A549 (cell line): ENCODE measurements at regions of chr17 and their contacts with region 1.

Region 1: DNA sequence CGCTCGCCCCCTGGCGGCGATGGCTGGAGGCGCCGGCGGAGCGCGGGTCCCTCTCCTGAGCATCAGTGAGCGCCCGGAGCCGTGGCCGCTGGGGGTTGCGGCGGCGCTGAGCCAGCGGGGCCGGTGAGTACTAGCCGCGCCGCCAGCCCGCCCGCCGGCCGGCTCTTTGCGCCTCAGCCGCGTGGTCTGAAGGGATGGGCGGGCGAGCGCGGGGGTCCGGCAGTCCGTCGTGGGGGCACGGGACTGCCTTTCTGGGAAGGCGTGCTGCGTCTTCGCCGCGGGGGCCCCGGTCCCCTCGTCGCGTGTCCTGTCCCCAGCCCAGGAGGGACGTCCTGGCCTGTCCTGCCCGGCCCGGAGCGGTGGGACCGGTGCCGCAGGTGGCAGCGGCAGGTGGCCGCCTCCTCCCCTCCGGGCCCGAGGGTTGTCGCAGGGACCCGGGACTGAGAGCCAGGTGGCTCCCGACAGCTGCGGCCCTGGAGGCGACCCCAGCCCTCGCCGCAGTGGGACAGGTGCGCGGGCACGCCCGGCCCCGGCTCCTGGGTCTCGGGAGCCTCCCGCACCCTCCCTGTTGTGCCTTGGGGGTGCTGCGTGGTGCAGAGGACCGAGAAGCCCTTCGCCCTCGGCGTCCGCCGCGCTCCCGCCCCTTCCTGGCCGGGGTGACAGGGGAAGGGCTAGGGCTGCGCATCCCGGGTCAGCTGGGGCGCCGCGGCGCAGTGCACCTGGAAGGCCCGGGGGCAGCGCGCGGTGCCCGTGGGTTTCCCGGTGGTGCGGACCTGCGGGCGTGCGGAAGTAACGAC is at the start of gene SPECC1:
- DNase-seq: peak; percentile 48 to 87
- ATAC-seq: peak; percentile 85 to 94
- H3K4me3 ChIP-seq: peak within 1 kb of the TSS; percentile 63
- H3K27ac ChIP-seq: peak within 1 kb of the TSS; percentile 88 to 93
- H3K4me1 ChIP-seq: peaks cover 25% of the 10 kb centered on the region
- CTCF ChIP-seq: peak; percentile 16; the same call in 2 of the 3 replicates
- EP300 ChIP-seq: no peak
- POLR2A ChIP-seq: peak; percentile 41; the same call in 1 of the 2 replicates
- RAD21 ChIP-seq: peak; percentile 37 to 64; a peak in 3 of 5 replicates
- polyA plus RNA-seq, gene SPECC1: 40.1 and 45.1 TPM in 2 replicates

Region 2: DNA sequence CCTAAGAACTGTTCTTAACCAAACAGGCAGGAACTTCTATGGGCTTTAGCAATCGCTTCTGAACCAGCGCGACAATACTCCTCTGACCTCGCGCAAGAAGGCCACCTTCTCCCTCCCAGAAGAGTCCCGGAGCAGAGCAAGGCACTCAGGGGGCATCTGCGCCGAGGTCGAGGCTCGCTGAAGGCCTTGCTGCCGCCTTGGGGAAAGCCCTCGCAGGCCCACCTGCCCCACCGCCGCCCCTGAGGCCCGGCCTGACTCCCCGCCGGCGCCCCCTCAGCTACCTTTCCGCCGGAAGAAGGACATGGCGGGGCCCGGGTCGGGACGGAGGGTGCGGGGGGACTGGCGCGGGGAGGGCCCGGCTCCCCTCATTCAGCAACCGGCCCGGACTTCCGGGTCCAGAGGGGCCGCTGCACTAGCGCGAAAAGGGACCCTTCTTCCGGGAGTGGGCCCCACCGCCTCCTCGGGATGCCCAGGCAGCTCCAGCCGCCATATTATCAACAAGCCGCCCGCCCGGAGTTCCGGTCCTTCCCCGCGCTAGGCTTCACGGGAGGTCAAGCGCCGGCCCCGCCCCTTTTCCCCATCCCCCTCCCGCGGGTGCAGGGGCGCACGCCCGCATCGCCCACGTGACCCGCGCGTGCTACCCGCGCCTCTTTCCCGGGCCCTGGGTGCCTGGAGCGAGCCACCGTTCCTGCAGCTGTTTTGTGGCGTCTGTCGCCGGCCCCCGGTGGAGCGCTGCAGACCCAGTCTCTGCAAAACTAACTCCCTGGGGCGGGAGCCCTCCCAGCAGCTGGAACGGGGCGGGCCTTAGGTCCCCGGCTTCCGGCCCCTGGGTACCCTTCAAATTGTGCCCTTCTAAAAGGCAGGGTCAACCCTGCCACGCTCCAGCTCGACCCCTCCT is 31.9 kb before region 1 on chr17 and contains the start of gene AKAP10:
- CTCF ChIA-PET with region 1: interaction called, 35 read pairs
- POLR2A ChIA-PET with region 1: interaction called, 12 read pairs
- DNase-seq: peak; percentile 89 to 90
- ATAC-seq: peak; percentile 94 to 96
- H3K4me3 ChIP-seq: peak within 1 kb of the TSS; percentile 76
- H3K27ac ChIP-seq: peak within 1 kb of the TSS; percentile 85 to 93
- H3K4me1 ChIP-seq: peaks cover 18% of the 10 kb centered on the region
- CTCF ChIP-seq: no peak
- EP300 ChIP-seq: no peak
- POLR2A ChIP-seq: peak; percentile 58
- RAD21 ChIP-seq: peak in 1 of 2 experiments; percentile 25; a peak in 1 of 5 replicates
- polyA plus RNA-seq, gene AKAP10: 51.1 and 52.9 TPM in 2 replicates

Region 3: DNA sequence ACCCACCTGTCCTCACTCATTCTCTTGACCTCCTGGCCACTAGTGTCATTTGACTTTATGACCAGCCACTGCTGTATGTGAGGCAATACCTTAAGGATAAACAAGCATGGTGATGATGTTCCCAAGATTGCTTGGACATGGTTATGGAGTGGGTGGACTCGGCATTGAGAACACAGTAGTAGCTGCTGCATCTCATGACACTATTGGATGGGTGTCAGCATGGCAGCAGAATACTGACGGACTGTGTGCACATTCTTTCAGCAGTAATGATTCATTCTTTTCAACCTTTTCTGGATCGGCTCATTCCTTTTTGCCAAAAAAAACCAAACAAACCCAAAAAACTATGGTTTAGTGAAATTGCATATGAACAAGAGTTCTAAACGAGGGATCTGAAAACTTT is 13.2 kb after region 1 on chr17:
- CTCF ChIA-PET with region 1: interaction called, 37 read pairs
- POLR2A ChIA-PET with region 1: no interaction called
- DNase-seq: no peak
- ATAC-seq: no peak
- H3K4me3 ChIP-seq: no peak overlapping the region
- H3K27ac ChIP-seq: no peak overlapping the region
- H3K4me1 ChIP-seq: peaks cover 7% of the 10 kb centered on the region; the same call in 1 of the 3 replicates
- CTCF ChIP-seq: no peak
- EP300 ChIP-seq: no peak
- POLR2A ChIP-seq: no peak
- RAD21 ChIP-seq: no peak

Region 4: GRCh38 chr17:20043021-20043420 is 33.5 kb after region 1 on chr17:
- CTCF ChIA-PET with region 1: interaction called, 26 read pairs
- POLR2A ChIA-PET with region 1: no interaction called
- DNase-seq: no peak
- ATAC-seq: no peak
- H3K4me3 ChIP-seq: no peak overlapping the region
- H3K27ac ChIP-seq: no peak overlapping the region
- H3K4me1 ChIP-seq: no peaks in the 10 kb centered on the region
- CTCF ChIP-seq: no peak
- EP300 ChIP-seq: no peak
- POLR2A ChIP-seq: no peak
- RAD21 ChIP-seq: no peak

Region 5: GRCh38 chr17:20073055-20073979 is 63.8 kb after region 1 on chr17:
- CTCF ChIA-PET with region 1: interaction called, 60 read pairs
- POLR2A ChIA-PET with region 1: interaction called, 12 read pairs
- DNase-seq: no peak
- ATAC-seq: peak in 1 of 2 experiments; percentile 20; a peak in 1 of 6 replicates
- H3K4me3 ChIP-seq: no peak overlapping the region
- H3K27ac ChIP-seq: peak overlapping the region in 1 of 2 experiments; percentile 40; a peak in 2 of 6 replicates
- H3K4me1 ChIP-seq: peaks cover 31% of the 10 kb centered on the region
- CTCF ChIP-seq: no peak
- EP300 ChIP-seq: no peak
- POLR2A ChIP-seq: no peak
- RAD21 ChIP-seq: no peak

Region 6: DNA sequence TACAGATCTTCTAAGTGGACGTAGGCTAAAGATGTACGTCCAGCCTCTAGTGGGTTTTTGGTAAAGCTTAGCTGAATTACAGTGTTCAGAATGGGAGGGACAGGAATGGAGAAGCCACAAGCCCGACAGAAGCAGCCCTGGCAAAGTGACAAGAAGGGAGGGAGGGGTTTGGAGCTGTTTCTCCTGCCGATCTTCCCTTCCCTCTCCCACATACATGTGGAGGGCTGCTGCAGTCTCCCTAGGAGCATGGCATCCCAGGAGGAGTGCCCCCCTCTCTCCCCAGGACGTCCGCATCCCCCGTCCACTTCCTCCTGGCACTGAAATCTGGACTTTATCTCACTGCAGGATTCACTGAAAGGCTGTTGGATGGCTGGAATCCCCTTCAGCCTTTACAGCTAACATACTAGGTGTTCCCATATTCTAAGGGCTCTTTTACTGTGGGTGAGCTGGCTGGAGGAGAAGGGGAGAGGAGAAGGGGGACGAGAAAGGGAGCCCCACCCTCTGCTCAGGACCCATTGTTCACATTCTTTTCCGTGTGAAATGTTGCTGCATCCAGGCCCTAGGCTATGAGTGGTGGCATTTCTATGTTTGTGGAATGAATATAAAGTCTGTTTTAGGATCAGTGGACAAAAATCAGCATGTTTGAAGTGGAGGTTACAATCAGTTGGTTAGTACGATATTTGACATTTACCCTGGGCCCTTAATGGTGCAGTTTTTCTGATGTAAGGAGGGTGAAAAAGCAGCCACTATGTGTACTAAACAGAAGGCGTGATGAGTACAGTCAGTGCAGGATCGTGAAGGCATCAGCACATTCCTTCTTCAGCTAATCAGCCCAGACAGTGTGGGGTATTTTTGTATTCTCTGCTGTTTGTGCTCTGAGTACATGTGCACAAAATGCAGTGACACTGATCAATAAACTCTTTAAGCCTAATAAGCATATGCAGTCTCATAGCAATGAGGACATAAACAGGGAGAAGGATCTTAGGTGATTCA is 94.2 kb after region 1 on chr17:
- CTCF ChIA-PET with region 1: interaction called, 54 read pairs
- POLR2A ChIA-PET with region 1: no interaction called
- DNase-seq: no peak
- ATAC-seq: peak in 1 of 2 experiments; percentile 46; a peak in 2 of 6 replicates
- H3K4me3 ChIP-seq: no peak overlapping the region
- H3K27ac ChIP-seq: peak overlapping the region; percentile 33 to 51; a peak in 3 of 6 replicates
- H3K4me1 ChIP-seq: peaks cover 9% of the 10 kb centered on the region; the same call in 2 of the 3 replicates
- CTCF ChIP-seq: no peak
- EP300 ChIP-seq: no peak
- POLR2A ChIP-seq: no peak
- RAD21 ChIP-seq: no peak

Region 7: DNA sequence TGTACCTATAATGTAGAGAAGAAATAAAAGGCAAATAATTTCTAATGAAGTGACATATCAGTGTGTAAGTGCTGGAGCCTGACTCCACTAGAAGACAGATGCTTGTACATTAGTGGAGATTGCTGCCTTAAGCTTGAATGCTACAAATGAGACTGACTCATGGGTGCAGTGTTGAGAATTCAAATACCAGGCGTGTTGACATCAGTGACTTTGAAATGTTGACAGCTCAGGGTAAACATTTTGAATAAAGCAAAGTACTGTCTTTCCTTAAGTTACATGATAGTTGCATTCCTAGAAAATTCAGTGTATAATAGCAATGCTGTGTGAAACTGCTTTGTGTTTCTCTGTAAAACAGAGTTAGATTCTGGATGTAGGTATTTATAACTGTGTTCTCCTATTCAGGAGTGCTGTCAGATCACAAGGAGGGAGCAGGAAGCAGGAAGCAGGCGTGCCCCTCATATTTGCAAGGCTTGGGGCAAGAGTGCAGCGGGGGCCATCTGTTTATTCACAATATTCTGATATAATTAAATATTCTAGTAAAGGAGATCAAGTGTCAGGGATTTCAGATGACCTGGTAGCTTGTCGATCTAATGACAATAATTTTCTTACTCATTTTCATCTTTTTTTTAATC is 118.7 kb after region 1 on chr17:
- CTCF ChIA-PET with region 1: interaction called, 10 read pairs
- POLR2A ChIA-PET with region 1: no interaction called
- DNase-seq: peak in 1 of 2 experiments; percentile 19
- ATAC-seq: peak; percentile 34 to 49; a peak in 2 of 6 replicates
- H3K4me3 ChIP-seq: no peak overlapping the region
- H3K27ac ChIP-seq: no peak overlapping the region
- H3K4me1 ChIP-seq: peaks cover 9% of the 10 kb centered on the region
- CTCF ChIP-seq: no peak
- EP300 ChIP-seq: no peak
- POLR2A ChIP-seq: no peak
- RAD21 ChIP-seq: no peak